ENCODE measurements at regions of chr11 and their contacts with region 1.

Region 1: GRCh38 chr11:72722050-72722748 is 30.0 kb downstream of the ARAP1 start:
- DNase-seq: peak; percentile 85 to 92
- ATAC-seq: peak; percentile 68 to 88 (median 78)
- H3K4me3 ChIP-seq: peak overlapping the region; percentile 43
- H3K4me3 Mint-ChIP-seq: peak overlapping the region; percentile 81
- H3K27ac ChIP-seq: peak overlapping the region; percentile 83
- H3K27ac Mint-ChIP-seq: peak overlapping the region; percentile 93 to 94
- H3K4me1 ChIP-seq: peaks cover 86% of the 10 kb centered on the region
- H3K4me1 Mint-ChIP-seq: peaks cover 69 to 75% of the 10 kb centered on the region in 2 donors
- H3K27me3 ChIP-seq: no peaks in the 10 kb centered on the region
- H3K27me3 Mint-ChIP-seq: no peaks in the 10 kb centered on the region
- CTCF ChIP-seq: no peak

Region 2: DNA sequence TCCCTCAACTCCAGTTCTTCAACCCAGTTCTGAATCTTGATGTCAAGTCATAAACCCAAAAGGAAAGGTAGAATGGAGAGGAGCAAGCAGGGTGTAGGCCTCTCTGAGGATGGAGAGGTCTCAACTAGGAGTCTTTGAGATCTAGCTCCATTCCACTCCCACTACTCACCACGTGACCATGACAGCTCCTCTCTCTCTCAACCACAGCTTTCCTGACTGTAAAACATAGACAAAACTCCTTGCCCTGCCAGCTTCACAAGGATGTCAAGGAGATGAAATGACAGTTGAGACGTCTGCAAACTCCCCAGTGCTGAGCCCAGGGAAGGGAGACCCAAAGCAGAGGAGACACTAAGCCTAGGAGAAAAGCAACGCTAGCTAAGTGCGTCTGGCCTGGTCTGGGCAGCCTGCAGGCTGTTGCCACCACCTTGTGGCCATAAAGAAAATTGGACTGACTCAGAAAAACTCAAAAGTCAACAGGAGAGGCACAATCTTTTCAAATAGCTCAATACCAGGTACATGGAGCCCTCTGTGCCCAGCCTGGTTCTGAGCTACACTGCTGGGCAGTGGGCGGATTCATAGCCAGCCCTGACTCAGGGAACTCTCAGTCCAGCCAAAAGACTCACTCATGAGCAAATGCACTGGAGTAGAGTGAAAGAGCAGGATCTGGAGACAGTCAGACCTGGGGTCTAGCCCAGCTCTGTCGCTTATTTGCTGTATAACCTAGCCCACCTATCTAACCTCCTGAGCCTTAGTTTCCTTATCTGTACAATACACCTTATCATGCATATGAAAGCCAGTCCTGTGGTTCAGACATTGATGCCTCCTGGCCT is 291.2 kb before region 1 on chr11:
- intact Hi-C with region 1: no loop called
- DNase-seq: peak in 1 of 2 donors; percentile 70
- ATAC-seq: no peak
- H3K4me3 ChIP-seq: no peak overlapping the region
- H3K4me3 Mint-ChIP-seq: peak overlapping the region; percentile 35
- H3K27ac ChIP-seq: no peak overlapping the region
- H3K27ac Mint-ChIP-seq: peak overlapping the region; percentile 43 to 78
- H3K4me1 ChIP-seq: peaks cover 24% of the 10 kb centered on the region
- H3K4me1 Mint-ChIP-seq: peaks cover 35 to 50% of the 10 kb centered on the region in 2 donors
- H3K27me3 ChIP-seq: no peaks in the 10 kb centered on the region
- H3K27me3 Mint-ChIP-seq: no peaks in the 10 kb centered on the region
- CTCF ChIP-seq: peak; percentile 53

Region 3: GRCh38 chr11:72736452-72737069 is 14.4 kb after region 1 on chr11:
- intact Hi-C with region 1: loop called (anchors 1 kb)
- DNase-seq: peak; percentile 78 to 88
- ATAC-seq: peak; percentile 66 to 91 (median 82)
- H3K4me3 ChIP-seq: no peak overlapping the region
- H3K4me3 Mint-ChIP-seq: peak overlapping the region; percentile 87
- H3K27ac ChIP-seq: peak overlapping the region; percentile 97
- H3K27ac Mint-ChIP-seq: peak overlapping the region; percentile 97 to 100
- H3K4me1 ChIP-seq: peaks cover 91% of the 10 kb centered on the region
- H3K4me1 Mint-ChIP-seq: peaks cover 75 to 80% of the 10 kb centered on the region in 2 donors
- H3K27me3 ChIP-seq: no peaks in the 10 kb centered on the region
- H3K27me3 Mint-ChIP-seq: no peaks in the 10 kb centered on the region
- CTCF ChIP-seq: no peak

Region 4: DNA sequence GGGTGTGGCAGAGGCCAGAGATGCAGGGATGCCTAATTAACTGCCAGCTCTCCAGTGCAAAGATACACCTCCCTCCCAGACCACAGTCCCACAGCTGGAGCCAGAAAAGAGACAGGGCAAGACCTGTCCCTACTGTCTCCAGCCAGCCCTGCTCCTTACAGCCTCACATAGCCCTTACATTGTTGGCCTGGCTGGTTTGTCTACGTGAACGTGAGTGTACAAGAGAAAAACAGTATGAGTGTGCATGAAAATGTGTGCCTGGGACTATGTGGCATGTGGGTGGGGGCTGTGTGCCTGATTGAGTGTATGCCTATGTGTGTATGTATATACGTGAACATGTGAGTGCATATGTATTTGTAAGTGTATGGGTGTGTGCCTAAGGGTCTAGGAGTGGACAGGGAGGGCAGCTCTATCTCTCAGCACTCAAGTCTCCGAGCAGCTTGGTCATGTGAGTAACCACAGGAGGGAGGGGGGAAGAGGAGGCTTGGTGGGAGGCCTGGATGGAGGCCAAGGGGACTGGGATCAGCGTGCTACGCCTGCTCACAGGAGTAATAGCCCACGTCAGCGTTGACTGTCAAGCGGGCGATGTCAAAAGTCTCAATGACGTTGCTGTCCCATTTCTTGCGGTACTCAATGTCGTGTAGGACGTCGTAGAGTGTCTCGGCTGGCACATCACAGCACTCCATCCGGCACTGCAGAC is 36.6 kb after region 1 on chr11:
- intact Hi-C with region 1: no loop called
- DNase-seq: no peak
- ATAC-seq: peak in 1 of 3 donors; percentile 13
- H3K4me3 ChIP-seq: no peak overlapping the region
- H3K4me3 Mint-ChIP-seq: no peak overlapping the region
- H3K27ac ChIP-seq: no peak overlapping the region
- H3K27ac Mint-ChIP-seq: no peak overlapping the region
- H3K4me1 ChIP-seq: peaks cover 22% of the 10 kb centered on the region
- H3K4me1 Mint-ChIP-seq: peaks cover 10 to 18% of the 10 kb centered on the region in 2 donors
- H3K27me3 ChIP-seq: no peaks in the 10 kb centered on the region
- H3K27me3 Mint-ChIP-seq: no peaks in the 10 kb centered on the region
- CTCF ChIP-seq: no peak

Region 5: DNA sequence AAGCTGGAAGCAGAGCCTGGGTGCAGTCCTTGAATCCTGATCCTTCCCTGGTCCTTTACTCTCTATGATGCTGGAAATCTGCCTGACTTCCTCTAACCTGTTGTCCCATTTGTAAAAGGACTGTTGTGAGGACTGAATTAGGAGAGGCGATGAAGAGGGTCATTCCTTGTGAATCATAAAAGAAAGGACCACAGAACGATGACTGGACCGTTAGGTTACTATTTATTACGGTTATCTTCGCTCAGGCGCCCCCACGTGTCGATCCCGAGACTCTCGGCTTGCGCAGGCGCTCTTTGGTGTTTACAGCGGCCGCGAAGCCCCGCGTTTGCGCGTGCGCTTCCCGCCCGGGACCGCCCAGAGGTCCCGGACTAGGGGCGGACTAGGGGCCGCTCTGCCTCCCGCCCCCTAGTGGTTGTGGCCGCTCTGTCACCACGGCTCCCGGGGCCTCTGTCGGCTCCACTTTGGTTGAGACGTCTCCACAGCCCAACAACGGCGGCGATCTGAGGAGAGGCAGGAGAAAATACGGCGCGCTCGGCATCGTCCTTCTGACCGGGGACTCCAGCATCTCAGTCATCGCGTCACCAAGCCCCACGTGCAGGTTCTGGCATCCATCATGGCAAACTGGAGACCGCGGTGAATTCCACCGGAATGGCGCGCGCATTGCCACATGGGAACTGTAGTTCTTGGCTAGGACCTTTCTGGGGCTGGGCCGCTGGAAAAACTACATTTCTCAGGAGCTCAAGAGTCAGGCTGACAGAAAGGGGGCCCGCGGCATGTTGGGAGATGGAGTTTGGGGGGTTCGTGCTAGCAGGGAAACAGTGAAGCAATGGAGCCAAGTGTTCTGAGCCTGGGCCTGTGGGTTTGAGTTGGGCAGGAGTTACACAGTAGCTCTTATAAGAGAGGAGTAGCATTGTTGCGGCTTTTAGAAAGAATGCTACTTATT is 71.5 kb after region 1 on chr11 and contains the start of gene STARD10:
- intact Hi-C with region 1: loop called (anchors 1 kb)
- DNase-seq: peak; percentile 97 to 98
- ATAC-seq: peak; percentile 93 to 99 (median 94)
- H3K4me3 ChIP-seq: peak within 1 kb of the TSS; percentile 80
- H3K4me3 Mint-ChIP-seq: peak within 1 kb of the TSS; percentile 96
- H3K27ac ChIP-seq: peak within 1 kb of the TSS; percentile 97
- H3K27ac Mint-ChIP-seq: peak within 1 kb of the TSS; percentile 99
- H3K4me1 ChIP-seq: peaks cover 22% of the 10 kb centered on the region
- H3K4me1 Mint-ChIP-seq: peaks cover 23 to 24% of the 10 kb centered on the region in 2 donors
- H3K27me3 ChIP-seq: no peaks in the 10 kb centered on the region
- H3K27me3 Mint-ChIP-seq: no peaks in the 10 kb centered on the region
- CTCF ChIP-seq: peak; percentile 94
- total RNA-seq, gene STARD10: 10.9 to 17.3 (median 11.7) TPM

Region 6: DNA sequence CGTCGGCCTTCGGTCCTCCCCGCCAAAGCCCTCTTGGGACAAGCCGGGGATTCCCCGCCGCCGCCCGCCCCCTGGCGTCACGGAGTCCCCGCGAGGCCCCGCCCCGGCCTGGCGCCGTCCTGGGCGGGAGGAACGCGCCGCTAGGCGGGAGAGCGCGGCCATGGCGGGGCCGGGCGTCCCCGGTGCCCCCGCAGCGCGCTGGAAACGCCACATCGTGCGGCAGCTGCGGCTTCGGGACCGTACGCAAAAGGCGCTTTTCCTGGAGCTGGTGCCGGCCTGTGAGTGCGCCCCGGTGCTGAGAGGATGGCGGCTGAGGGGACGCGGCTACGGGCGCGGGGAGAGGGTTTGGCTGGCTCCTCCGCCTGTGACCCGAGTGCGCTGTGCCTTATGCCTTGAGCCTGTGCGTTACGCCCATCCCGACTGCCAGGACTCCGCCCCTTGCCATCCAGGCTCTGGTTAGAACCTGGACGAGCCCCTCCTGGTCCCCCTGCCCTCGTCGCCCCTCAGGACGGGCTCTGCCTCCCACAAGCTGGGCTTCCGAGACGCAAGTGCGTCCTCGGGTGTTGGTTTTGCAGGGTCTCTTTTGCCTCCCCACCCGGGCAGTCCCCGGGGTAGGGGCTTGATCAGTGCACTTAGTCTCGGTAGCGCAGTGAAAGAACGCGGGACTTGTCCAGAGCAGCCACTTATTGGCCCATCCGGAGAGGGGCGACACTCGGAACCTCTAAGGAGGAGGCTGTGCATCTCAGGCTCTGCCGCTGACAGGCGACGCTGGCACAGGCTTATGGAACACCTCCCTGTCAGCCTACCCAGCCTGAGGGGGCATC is 92.3 kb after region 1 on chr11 and contains the start of gene ATG16L2:
- intact Hi-C with region 1: loop called (anchors 1 kb)
- DNase-seq: peak; percentile 93 to 97
- ATAC-seq: peak; percentile 66 to 88 (median 78)
- H3K4me3 ChIP-seq: peak within 1 kb of the TSS; percentile 66
- H3K4me3 Mint-ChIP-seq: peak within 1 kb of the TSS; percentile 99
- H3K27ac ChIP-seq: peak within 1 kb of the TSS; percentile 100
- H3K27ac Mint-ChIP-seq: peak within 1 kb of the TSS; percentile 98 to 100
- H3K4me1 ChIP-seq: peaks cover 51% of the 10 kb centered on the region
- H3K4me1 Mint-ChIP-seq: peaks cover 50 to 63% of the 10 kb centered on the region in 2 donors
- H3K27me3 ChIP-seq: no peaks in the 10 kb centered on the region
- H3K27me3 Mint-ChIP-seq: no peaks in the 10 kb centered on the region
- CTCF ChIP-seq: no peak
- total RNA-seq, gene ATG16L2: 172 to 190 (median 179) TPM

Region 7: GRCh38 chr11:72848846-72849466 is 126.8 kb after region 1 on chr11:
- intact Hi-C with region 1: loop called (anchors 2 kb)
- DNase-seq: peak in 1 of 2 donors; percentile 75
- ATAC-seq: peak; percentile 64 to 76 (median 68)
- H3K4me3 ChIP-seq: no peak overlapping the region
- H3K4me3 Mint-ChIP-seq: no peak overlapping the region
- H3K27ac ChIP-seq: no peak overlapping the region
- H3K27ac Mint-ChIP-seq: no peak overlapping the region
- H3K4me1 ChIP-seq: no peaks in the 10 kb centered on the region
- H3K4me1 Mint-ChIP-seq: peaks cover 0 to 7% of the 10 kb centered on the region in 2 donors
- H3K27me3 ChIP-seq: no peaks in the 10 kb centered on the region
- H3K27me3 Mint-ChIP-seq: no peaks in the 10 kb centered on the region
- CTCF ChIP-seq: peak; percentile 73

Region 8: DNA sequence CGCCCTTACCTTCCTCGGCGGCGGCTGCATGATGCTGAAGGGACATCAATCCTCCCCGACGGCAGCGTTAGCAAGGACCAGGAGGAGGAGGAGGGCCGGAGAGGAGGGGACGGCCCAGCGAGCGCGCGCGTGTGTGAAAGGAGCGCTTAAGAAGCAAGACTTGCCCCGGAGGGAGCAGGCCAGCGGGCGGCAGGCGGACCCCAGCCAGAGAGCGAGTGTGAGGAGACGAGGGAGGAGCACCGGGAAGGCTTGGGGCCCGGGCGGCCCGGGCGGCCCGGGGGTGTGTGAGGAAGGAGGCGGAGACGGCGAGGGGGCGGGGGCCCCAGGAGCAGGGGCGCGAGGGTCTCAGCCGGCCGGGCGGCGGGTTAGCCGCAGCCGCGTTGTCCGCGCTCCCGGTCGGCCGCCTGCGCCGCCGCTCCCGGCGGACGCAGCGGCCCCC is 419.7 kb after region 1 on chr11:
- intact Hi-C with region 1: loop called (anchors 5 kb)
- DNase-seq: peak in 1 of 2 donors; percentile 56
- ATAC-seq: peak; percentile 24 to 39 (median 36)
- H3K4me3 ChIP-seq: peak overlapping the region; percentile 89
- H3K4me3 Mint-ChIP-seq: peak overlapping the region; percentile 96
- H3K27ac ChIP-seq: peak overlapping the region; percentile 88
- H3K27ac Mint-ChIP-seq: peak overlapping the region; percentile 98
- H3K4me1 ChIP-seq: peaks cover 45% of the 10 kb centered on the region
- H3K4me1 Mint-ChIP-seq: peaks cover 37 to 50% of the 10 kb centered on the region in 2 donors
- H3K27me3 ChIP-seq: no peaks in the 10 kb centered on the region
- H3K27me3 Mint-ChIP-seq: no peaks in the 10 kb centered on the region
- CTCF ChIP-seq: no peak

Region 9: DNA sequence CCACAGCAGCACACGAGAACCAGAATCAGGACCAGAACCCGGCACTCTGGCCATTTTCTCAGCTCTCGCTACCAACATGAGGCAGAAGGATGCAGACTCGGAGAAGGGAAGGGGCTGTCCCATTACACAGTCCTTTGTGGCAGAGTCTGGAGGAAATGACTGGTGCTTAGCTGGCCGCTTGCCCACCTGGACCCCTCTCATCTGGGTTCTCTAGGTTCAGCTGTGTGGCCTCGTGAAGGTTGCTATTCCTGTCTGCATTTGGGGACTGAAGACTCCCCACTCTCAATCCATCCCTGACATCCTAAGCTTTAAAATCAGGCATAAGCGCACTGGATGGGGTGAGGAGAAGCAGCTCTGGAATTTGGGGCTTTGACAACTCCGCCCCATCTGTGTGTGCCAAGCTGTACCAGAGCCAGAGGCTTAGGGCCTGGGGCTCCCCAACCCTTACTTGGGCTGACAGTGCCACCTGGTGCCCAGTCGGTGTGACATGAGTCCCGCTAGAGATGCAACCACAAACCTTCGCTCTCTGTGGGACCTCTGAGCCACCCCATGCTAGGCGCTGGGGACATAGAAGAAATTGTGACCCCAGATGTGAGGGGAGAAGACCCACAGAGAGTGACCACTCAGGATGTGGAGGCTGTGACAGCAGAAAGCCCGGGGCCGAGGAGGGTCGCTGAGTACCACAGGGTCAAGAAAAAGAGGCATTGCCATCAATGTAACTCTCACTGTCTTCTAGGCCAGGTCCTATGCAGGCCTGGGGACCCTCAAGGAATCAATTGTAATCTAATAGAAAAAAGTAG is 455.8 kb after region 1 on chr11:
- intact Hi-C with region 1: loop called (anchors 2 kb)
- DNase-seq: peak; percentile 66 to 89
- ATAC-seq: peak; percentile 90 to 99 (median 99)
- H3K4me3 ChIP-seq: no peak overlapping the region
- H3K4me3 Mint-ChIP-seq: no peak overlapping the region
- H3K27ac ChIP-seq: no peak overlapping the region
- H3K27ac Mint-ChIP-seq: no peak overlapping the region
- H3K4me1 ChIP-seq: peaks cover 10% of the 10 kb centered on the region
- H3K4me1 Mint-ChIP-seq: peaks cover 5 to 13% of the 10 kb centered on the region in 2 donors
- H3K27me3 ChIP-seq: no peaks in the 10 kb centered on the region
- H3K27me3 Mint-ChIP-seq: peaks cover 3 to 4% of the 10 kb centered on the region in 2 donors
- CTCF ChIP-seq: peak; percentile 78

Measured in natural killer cell (primary cell).